Heart left ventricle (tissue), 16 donors: ENCODE measurements at regions of chr5 and their contacts with region 1.

Region 1: GRCh38 chr5:144298658-144299057 is 128.0 kb downstream of the KCTD16 start:
- DNase-seq: no peak
- ATAC-seq: no peak
- H3K4me3 ChIP-seq: no peak overlapping the region
- H3K27ac ChIP-seq: no peak overlapping the region
- H3K4me1 ChIP-seq: no peaks in the 10 kb centered on the region
- H3K27me3 ChIP-seq: no peaks in the 10 kb centered on the region
- CTCF ChIP-seq: no peak
- POLR2A ChIP-seq: no peak

Region 2: DNA sequence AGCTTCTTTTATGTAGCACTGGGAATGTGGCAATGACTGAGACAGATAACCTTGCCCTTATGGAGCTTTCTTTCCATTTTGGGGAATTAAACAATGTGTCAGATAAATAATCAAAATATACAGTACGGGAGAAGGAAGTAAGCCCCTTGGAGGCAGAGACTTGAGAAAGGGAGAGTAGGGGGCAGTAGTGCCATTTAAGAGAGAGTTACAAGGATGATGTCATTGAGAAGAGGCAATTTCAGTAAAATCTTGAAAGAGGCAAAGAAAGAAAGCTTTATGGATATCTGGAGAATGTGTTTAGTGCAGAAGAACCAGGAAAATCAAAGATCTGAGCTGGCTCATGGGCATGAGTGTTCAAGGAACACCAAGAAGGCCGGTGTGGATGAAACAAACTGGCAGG is 50.6 kb before region 1 on chr5:
- intact Hi-C with region 1: no loop called
- DNase-seq: no peak
- ATAC-seq: no peak
- H3K4me3 ChIP-seq: no peak overlapping the region
- H3K27ac ChIP-seq: no peak overlapping the region
- H3K4me1 ChIP-seq: no peaks in the 10 kb centered on the region
- H3K27me3 ChIP-seq: peaks cover 0 to 6% (median 0%) of the 10 kb centered on the region in 9 donors
- CTCF ChIP-seq: no peak
- POLR2A ChIP-seq: no peak

Region 3: DNA sequence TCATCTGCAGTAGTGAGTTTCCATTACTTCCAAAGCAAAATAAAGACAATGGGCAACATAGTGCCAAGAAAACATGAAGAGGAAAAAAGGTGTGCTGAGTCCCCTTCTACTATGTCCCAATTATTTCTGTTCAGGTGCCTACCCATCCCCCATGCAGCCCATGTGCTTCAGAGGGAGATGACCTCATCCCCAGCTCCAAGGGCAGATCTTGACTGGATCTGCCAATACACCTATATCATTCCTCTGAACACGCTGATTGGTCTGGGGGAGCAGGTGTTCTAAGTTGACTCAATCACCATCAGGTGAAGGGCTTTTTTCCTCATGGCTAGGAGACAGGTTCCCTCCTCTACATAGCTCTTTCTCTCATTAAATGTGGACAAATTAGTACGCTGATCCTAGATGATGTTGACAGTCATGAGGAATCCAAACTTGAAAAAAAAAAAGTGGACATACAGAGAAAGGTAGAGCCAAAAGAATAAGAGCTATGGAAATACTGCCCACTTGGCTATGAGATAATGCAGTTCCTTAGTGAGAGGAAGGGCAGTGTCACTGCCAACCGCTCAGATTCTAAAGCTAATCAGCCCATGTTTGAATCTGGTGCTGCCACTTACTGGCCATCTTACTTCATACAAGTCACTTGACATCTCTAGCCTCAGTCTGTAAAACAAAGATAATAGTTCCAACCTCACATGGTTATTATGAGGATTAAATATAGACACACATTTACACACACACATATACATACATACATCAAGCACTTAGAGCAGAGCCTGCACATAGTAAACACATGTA is 1513.4 kb after region 1 on chr5:
- intact Hi-C with region 1: loop called in 1 of 10 experiments (anchors 5 kb)
- DNase-seq: no peak
- ATAC-seq: peak in 3 of 4 donors; percentile 76 to 82 (median 81)
- H3K4me3 ChIP-seq: no peak overlapping the region
- H3K27ac ChIP-seq: no peak overlapping the region
- H3K4me1 ChIP-seq: peaks cover 0 to 9% (median 0%) of the 10 kb centered on the region in 12 donors
- H3K27me3 ChIP-seq: no peaks in the 10 kb centered on the region
- CTCF ChIP-seq: peak; percentile 6 to 50 (median 20)
- POLR2A ChIP-seq: no peak